ENCODE measurements at regions of chr9 and their contacts with region 1.

Region 1: DNA sequence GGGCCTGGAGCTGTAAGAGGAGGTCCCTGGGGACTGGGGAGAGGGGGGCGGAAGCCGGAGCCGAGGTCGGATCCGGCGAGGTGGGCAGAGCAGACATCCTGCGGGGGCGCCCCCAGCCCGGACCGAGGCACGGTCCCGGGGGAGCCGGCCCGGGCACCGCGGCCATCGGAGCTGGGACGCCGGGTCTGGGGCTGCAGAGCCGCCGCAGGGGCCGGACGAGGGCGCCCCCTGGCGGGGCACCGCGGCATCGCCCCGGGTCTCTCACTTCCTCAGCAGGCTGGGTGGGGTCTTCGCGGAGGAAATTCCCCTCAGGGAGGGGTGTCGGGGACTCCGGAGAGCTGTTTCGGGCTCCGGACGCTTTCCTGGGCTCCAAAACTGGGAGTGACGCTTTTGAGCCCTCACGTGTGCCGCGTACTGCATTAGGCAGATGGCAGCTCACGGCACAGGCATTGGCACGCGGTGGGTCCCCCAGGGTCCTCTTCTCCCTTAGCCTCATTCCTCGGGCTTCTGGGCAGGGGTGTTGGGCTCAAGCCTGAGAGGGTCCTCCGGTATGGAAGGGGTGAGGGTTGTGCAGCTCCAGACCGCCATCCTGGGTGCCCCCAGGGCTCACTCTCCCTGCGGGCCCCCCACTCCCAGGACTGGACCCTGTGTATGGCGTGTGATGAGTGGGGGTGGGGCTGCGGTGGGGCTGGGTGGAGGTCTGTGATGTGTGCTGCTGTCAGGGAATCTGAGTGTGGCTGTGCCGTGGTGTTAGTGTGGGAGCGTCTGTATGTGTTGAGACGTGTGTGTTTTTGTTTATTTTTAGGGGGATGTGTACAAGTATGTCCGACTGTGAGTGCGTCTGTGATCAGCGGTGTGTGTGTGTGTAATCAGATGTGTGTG is 29.6 kb downstream of the LHX2 start:
- DNase-seq: peak; percentile 79
- ATAC-seq: peak; percentile 71
- H3K4me3 Mint-ChIP-seq: peak overlapping the region; percentile 63
- H3K27ac Mint-ChIP-seq: no peak overlapping the region
- H3K4me1 Mint-ChIP-seq: peaks cover 7% of the 10 kb centered on the region; the same call in 1 of the 2 replicates
- H3K27me3 Mint-ChIP-seq: peaks cover 82% of the 10 kb centered on the region
- CTCF ChIP-seq: peak; percentile 99

Region 2: DNA sequence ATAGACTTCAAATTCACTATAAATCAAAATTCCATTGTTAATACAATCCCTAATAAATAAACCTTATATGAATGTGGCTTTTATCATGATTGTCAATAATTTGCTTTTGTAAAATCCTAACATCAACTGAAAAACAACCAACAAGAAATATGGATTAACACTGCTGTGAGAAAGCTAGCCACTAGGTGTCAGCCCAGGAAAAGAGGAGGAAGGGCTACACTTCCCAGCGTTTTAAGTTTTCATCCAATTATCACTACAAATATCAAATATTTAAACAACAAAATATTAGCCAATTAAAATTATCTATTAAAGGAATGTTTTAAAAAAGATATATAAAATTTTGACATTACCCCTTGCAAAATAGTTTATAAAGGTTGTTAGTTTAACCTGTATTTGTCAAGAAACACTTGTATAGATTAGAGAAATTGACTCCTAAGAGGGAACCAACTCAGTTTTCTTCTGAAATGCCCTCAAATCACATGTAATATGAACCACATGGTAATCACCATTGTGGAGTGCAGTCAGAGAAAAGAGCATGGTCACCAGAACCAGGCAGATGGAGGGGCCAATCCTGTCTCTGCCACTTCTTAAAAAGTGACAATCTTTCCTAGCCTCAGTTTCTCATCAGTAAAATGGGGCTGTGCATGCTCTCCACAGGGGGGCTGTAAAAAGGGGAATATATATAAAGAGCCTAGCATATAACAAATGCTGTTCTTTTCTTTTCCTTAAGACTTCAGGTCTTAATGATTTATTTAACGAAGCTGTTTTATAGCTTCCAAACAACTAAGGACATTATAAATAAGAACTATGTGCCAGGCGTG is 497.0 kb before region 1 on chr9:
- CTCF ChIA-PET with region 1: interaction called, 21 read pairs
- POLR2A ChIA-PET with region 1: no interaction called
- DNase-seq: no peak
- ATAC-seq: peak; percentile 34; the same call in 1 of the 2 replicates
- H3K4me3 Mint-ChIP-seq: no peak overlapping the region
- H3K27ac Mint-ChIP-seq: no peak overlapping the region
- H3K4me1 Mint-ChIP-seq: peaks cover 6% of the 10 kb centered on the region
- H3K27me3 Mint-ChIP-seq: no peaks in the 10 kb centered on the region
- CTCF ChIP-seq: peak; percentile 50

Region 3: DNA sequence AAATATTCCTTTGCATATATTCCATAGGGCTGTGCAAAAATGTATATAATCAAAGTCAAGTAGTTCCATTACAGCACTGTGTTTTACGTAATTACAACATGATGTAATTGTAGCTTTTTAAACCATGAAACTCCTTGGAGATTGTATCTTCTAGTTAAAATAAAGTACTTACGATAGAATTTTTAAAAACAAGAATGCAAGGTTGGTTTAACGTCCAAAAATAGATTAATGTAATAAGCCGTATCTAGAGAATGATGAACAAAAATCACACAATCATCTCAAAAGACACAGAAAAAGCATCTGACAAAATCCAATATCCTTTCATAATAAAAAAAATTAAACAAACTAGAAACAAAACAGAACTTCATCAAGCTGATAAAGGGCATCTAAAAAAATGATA is 197.5 kb before region 1 on chr9:
- CTCF ChIA-PET with region 1: no interaction called
- POLR2A ChIA-PET with region 1: no interaction called
- DNase-seq: no peak
- ATAC-seq: no peak
- H3K4me3 Mint-ChIP-seq: no peak overlapping the region
- H3K27ac Mint-ChIP-seq: no peak overlapping the region
- H3K4me1 Mint-ChIP-seq: peaks cover 30% of the 10 kb centered on the region
- H3K27me3 Mint-ChIP-seq: no peaks in the 10 kb centered on the region
- CTCF ChIP-seq: no peak

Region 4: DNA sequence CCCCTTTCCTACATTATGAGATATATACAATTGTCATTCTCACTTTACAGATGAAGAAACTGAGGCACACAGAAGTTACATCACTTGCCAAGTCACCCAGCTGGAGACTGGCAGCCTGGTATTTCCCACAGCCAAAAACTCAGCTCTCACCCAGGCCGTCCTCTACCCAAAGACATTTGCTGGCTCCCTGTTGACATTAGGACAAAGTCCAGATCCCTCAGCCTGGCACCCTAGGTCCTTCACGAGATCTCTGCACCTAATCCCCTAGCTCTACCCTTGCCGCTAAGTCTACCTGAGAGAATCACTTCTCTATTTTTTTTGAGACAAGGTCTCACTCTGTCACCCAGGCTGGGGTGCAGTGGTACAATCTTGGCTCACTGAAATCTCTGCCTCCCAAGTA is 56.4 kb before region 1 on chr9:
- CTCF ChIA-PET with region 1: interaction called, 10 read pairs
- POLR2A ChIA-PET with region 1: no interaction called
- DNase-seq: no peak
- ATAC-seq: no peak
- H3K4me3 Mint-ChIP-seq: no peak overlapping the region
- H3K27ac Mint-ChIP-seq: no peak overlapping the region
- H3K4me1 Mint-ChIP-seq: no peaks in the 10 kb centered on the region
- H3K27me3 Mint-ChIP-seq: peaks cover 45% of the 10 kb centered on the region
- CTCF ChIP-seq: no peak

Region 5: GRCh38 chr9:124011420-124012301 is 29.5 kb before region 1 on chr9 and contains the start of gene LHX2:
- CTCF ChIA-PET with region 1: interaction called, 35 read pairs
- POLR2A ChIA-PET with region 1: no interaction called
- DNase-seq: peak; percentile 91
- ATAC-seq: peak; percentile 76
- H3K4me3 Mint-ChIP-seq: peak within 1 kb of the TSS; percentile 64
- H3K27ac Mint-ChIP-seq: no peak within 1 kb of the TSS
- H3K4me1 Mint-ChIP-seq: peaks cover 57% of the 10 kb centered on the region
- H3K27me3 Mint-ChIP-seq: peaks cover 96% of the 10 kb centered on the region
- CTCF ChIP-seq: no peak
- total RNA-seq, gene LHX2: 0.42 to 0.50 TPM in 2 of 3 replicates, not detected in the other

Region 6: GRCh38 chr9:124030969-124031451 is 10.2 kb before region 1 on chr9:
- CTCF ChIA-PET with region 1: interaction called, 32 read pairs
- POLR2A ChIA-PET with region 1: no interaction called
- DNase-seq: no peak
- ATAC-seq: no peak
- H3K4me3 Mint-ChIP-seq: no peak overlapping the region
- H3K27ac Mint-ChIP-seq: no peak overlapping the region
- H3K4me1 Mint-ChIP-seq: peaks cover 9% of the 10 kb centered on the region
- H3K27me3 Mint-ChIP-seq: peaks cover 72% of the 10 kb centered on the region
- CTCF ChIP-seq: no peak

Region 7: DNA sequence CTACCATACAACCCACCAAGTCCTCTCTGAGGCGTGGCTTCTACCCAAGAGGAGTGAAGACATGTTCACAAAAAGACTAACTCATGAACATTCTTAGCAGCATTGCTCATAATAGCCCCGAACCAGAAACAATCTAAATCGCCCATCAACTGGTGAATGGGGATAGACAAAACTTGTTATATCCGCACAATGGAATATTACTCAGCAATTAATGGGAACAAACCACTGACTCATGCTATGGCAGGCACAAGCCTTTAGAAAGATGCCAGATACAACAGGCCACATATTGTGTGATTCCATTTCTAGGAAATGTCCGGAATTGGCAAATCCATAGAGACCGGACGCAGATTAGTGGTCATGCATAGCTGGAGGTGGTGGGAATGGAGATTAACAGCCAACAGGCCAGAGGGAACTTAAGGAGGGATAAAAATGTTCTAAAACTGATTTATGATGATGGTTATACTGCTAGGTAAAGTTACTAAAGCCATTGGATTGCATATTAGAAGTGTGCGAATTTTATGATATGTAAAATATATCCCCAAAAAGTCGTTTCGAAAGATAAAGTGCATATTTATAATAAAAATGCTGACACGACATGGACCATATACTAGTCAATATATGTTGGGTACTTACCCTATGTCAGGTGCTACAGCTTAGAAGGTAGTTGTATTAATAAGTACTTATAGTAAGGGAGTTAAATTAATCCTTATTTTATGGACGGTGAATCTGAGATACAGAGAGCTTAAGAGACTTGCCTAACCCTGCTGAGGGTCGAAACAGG is 25.8 kb after region 1 on chr9:
- CTCF ChIA-PET with region 1: no interaction called
- POLR2A ChIA-PET with region 1: no interaction called
- DNase-seq: no peak
- ATAC-seq: no peak
- H3K4me3 Mint-ChIP-seq: no peak overlapping the region
- H3K27ac Mint-ChIP-seq: no peak overlapping the region
- H3K4me1 Mint-ChIP-seq: no peaks in the 10 kb centered on the region
- H3K27me3 Mint-ChIP-seq: peaks cover 16% of the 10 kb centered on the region
- CTCF ChIP-seq: no peak

Measured in WTC11 (cell line).